AG04450 (cell line): ENCODE measurements at regions of chr7 and their contacts with region 1.

Region 1: DNA sequence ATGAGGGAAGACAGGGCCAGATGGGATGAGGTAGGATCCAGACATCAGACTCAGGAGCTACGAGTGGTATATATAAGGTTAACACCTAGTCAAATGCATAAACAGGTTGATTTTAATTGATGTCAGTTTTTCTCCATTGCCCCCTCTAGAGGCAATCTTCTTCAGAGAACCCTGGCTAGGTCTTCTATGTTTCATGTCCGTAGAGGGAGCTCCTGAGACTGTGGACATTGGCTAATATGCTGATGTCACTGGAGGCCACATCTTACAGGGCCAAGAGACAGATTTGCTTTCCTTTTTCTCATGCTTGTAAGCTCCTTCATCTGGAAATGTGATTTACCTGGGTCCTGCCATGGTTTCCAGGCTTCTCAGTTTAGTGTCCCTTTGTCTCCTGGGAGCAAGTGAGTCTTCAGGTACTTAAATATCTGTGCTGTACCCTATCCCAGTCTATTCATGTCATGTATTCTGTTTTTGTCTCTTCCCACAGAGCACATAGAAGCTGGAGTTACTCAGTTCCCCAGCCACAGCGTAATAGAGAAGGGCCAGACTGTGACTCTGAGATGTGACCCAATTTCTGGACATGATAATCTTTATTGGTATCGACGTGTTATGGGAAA is 161.6 kb upstream of the PRSS1 start:
- DNase-seq: no peak
- H3K4me3 ChIP-seq: no peak overlapping the region
- H3K27ac ChIP-seq: no peak overlapping the region
- H3K27me3 ChIP-seq: no peaks in the 10 kb centered on the region
- CTCF ChIP-seq: peak; percentile 69

Region 2: GRCh38 chr7:142459551-142459963 is 128.1 kb before region 1 on chr7:
- CTCF ChIA-PET with region 1: interaction called, 10 read pairs
- POLR2A ChIA-PET with region 1: no interaction called
- DNase-seq: peak; percentile 59
- H3K4me3 ChIP-seq: no peak overlapping the region
- H3K27ac ChIP-seq: no peak overlapping the region
- H3K27me3 ChIP-seq: no peaks in the 10 kb centered on the region
- CTCF ChIP-seq: peak; percentile 74

Region 3: DNA sequence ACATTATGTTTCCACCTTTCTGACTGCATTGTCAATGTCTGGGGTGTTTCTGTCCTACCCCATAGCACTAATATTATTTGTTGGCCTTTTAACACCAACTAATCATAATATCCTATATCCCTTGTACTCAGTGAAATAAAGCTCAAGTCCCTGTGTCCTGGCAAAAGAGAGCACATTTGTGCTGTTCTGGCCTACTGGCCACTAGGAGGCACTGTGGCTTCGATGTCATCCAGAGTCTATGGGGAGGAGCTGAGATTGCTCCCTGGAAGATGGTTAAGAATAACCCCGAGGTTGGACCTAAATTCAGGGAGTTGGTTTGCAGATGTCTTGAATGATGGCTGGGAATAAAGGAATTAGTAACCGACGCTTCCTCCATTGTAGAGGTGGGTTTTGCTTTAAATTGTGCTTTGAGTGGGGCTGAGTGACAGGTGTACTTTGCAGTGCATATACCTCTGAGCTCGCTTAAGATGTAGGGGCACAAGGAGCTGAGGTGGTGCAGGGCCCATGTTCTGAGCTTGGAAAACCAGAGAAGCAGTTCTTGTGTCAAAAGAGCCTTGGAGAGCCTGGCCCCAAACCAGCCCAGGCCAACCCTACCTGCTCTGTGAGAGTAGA is 29.6 kb before region 1 on chr7:
- CTCF ChIA-PET with region 1: interaction called, 23 read pairs
- POLR2A ChIA-PET with region 1: no interaction called
- DNase-seq: no peak
- H3K4me3 ChIP-seq: no peak overlapping the region
- H3K27ac ChIP-seq: no peak overlapping the region
- H3K27me3 ChIP-seq: no peaks in the 10 kb centered on the region
- CTCF ChIP-seq: peak; percentile 65

Region 4: DNA sequence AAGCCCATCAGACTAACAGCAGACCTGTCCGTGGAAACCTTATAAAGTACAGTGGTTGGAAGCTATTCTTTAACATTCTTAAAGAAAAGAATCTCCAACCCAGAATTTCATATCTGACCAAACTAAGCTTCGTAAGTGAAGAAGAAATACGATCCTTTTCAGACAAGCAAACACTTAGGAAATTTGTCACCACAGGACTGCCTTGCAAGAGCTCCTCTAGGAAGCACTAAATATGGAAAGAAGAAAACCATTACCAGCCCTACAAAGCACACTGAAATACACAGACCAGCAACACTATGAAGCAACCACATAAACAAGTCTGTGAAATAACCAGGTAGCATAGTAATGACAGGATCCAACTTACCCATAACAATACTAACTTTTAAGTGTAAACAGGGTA is 16.1 kb before region 1 on chr7:
- CTCF ChIA-PET with region 1: interaction called, 21 read pairs
- POLR2A ChIA-PET with region 1: no interaction called
- DNase-seq: no peak
- H3K4me3 ChIP-seq: no peak overlapping the region
- H3K27ac ChIP-seq: no peak overlapping the region
- H3K27me3 ChIP-seq: no peaks in the 10 kb centered on the region
- CTCF ChIP-seq: no peak

Region 5: GRCh38 chr7:142603870-142604448 is 16.3 kb after region 1 on chr7:
- CTCF ChIA-PET with region 1: interaction called, 34 read pairs
- POLR2A ChIA-PET with region 1: no interaction called
- DNase-seq: no peak
- H3K4me3 ChIP-seq: no peak overlapping the region; the same call in 1 of the 2 replicates
- H3K27ac ChIP-seq: no peak overlapping the region
- H3K27me3 ChIP-seq: peaks cover 2% of the 10 kb centered on the region
- CTCF ChIP-seq: peak; percentile 87